Naive thymus-derived CD4-positive, alpha-beta T cell (primary cell): ENCODE measurements at regions of chr19 and their contacts with region 1.

Region 1: GRCh38 chr19:6891761-6892385 is 4.5 kb downstream of the ADGRE1 start:
- DNase-seq: peak in 7 of 9 donors; percentile 28 to 75 (median 64)
- ATAC-seq: peak; percentile 74
- H3K4me3 ChIP-seq: peak overlapping the region; percentile 7
- H3K4me3 Mint-ChIP-seq: peak overlapping the region; percentile 54 to 89 (median 72)
- H3K27ac ChIP-seq: peak overlapping the region; percentile 65
- H3K27ac Mint-ChIP-seq: peak overlapping the region; percentile 85 to 97 (median 94)
- H3K4me1 ChIP-seq: peaks cover 31 to 77% of the 10 kb centered on the region in 2 donors
- H3K4me1 Mint-ChIP-seq: peaks cover 61 to 100% (median 93%) of the 10 kb centered on the region in 7 donors
- H3K27me3 ChIP-seq: no peaks in the 10 kb centered on the region
- H3K27me3 Mint-ChIP-seq: no peaks in the 10 kb centered on the region

Region 2: DNA sequence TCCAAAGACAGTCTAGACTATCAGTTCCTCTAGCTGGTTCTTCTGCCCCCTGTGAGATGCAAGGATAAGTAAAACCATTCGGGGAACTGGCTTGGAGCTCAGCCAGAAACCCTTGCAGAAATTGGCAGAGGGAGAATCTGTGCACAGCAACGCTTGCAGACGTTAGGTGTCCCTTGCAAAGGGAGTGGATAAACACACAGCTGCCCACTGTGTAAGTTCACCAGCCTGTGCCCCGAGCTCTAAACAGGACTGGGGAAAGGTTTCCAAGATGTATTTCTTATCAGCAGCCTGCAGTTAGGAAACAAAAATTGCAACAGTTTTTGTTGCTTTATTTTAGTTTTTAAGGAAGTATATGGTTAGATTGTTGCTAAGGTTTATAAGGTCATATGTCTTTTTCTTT is 23.5 kb before region 1 on chr19:
- CTCF ChIA-PET with region 1: interaction called, 25 read pairs
- POLR2A ChIA-PET with region 1: interaction called, 58 read pairs
- intact Hi-C with region 1: loop called (anchors 1 to 2 kb)
- DNase-seq: no peak
- ATAC-seq: peak; percentile 30
- H3K4me3 ChIP-seq: no peak overlapping the region
- H3K4me3 Mint-ChIP-seq: peak overlapping the region in 8 of 10 donors; percentile 11 to 55 (median 29)
- H3K27ac ChIP-seq: peak overlapping the region; percentile 1
- H3K27ac Mint-ChIP-seq: peak overlapping the region in 6 of 9 donors; percentile 28 to 90 (median 76)
- H3K4me1 ChIP-seq: peaks cover 0 to 10% of the 10 kb centered on the region in 2 donors
- H3K4me1 Mint-ChIP-seq: peaks cover 3 to 50% (median 34%) of the 10 kb centered on the region in 7 donors
- H3K27me3 ChIP-seq: no peaks in the 10 kb centered on the region
- H3K27me3 Mint-ChIP-seq: no peaks in the 10 kb centered on the region

Region 3: GRCh38 chr19:6876748-6877147 is 15.1 kb before region 1 on chr19:
- CTCF ChIA-PET with region 1: interaction called, 4 read pairs
- POLR2A ChIA-PET with region 1: interaction called, 17 read pairs
- intact Hi-C with region 1: loop called in 1 of 2 experiments (anchors 2 kb)
- DNase-seq: no peak
- ATAC-seq: peak; percentile 27
- H3K4me3 ChIP-seq: no peak overlapping the region
- H3K4me3 Mint-ChIP-seq: peak overlapping the region in 1 of 10 donors; percentile 36
- H3K27ac ChIP-seq: no peak overlapping the region
- H3K27ac Mint-ChIP-seq: peak overlapping the region in 4 of 9 donors; percentile 19 to 84 (median 58)
- H3K4me1 ChIP-seq: peaks cover 0 to 13% of the 10 kb centered on the region in 2 donors
- H3K4me1 Mint-ChIP-seq: peaks cover 6 to 44% (median 17%) of the 10 kb centered on the region in 7 donors
- H3K27me3 ChIP-seq: no peaks in the 10 kb centered on the region
- H3K27me3 Mint-ChIP-seq: peaks cover 0 to 12% (median 0%) of the 10 kb centered on the region in 5 donors

Region 4: DNA sequence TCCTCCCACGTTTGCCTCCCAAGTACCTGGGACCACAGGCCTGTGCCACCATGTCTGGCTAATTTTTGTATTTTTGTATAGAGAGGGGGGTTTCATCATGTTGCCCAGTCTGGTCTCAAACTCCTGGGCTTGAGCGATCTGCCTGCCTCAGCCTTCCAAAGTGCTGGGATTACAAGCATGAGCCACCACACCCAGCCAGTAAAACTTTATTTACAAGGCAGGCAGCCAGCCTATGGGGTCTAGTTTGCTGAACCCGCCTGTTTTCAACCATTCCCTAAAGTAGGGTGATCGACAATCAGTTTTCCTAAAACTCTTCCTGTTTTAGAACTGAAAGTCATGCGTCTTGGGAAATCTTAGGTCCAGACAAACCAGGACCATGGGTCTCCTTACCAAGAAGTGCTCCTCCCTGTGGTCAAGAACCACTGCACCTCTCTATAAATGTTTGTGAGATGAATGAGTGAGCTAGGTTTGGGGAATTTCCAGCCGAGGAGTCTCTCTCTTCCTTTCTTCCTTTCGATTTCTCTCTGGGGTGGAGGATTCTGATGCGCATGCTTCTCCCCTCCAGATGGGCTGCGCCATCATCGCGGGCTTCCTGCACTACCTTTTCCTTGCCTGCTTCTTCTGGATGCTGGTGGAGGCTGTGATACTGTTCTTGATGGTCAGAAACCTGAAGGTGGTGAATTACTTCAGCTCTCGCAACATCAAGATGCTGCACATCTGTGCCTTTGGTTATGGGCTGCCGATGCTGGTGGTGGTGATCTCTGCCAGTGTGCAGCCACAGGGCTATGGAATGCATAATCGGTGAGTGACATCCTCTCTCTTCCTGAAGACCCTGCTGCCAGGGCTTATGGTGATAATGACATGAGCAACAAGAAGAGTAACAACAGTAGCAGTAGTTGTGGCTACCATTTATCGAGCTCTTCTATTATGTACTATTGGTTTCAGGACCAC is 34.2 kb after region 1 on chr19:
- CTCF ChIA-PET with region 1: no interaction called
- POLR2A ChIA-PET with region 1: interaction called, 6 read pairs
- intact Hi-C with region 1: loop called in 1 of 2 experiments (anchors 2 kb)
- DNase-seq: peak in 7 of 9 donors; percentile 2 to 47 (median 12)
- ATAC-seq: peak; percentile 93
- H3K4me3 ChIP-seq: peak overlapping the region; percentile 34
- H3K4me3 Mint-ChIP-seq: peak overlapping the region; percentile 36 to 89 (median 72)
- H3K27ac ChIP-seq: no peak overlapping the region
- H3K27ac Mint-ChIP-seq: peak overlapping the region in 8 of 9 donors; percentile 5 to 93 (median 90)
- H3K4me1 ChIP-seq: peaks cover 3 to 11% of the 10 kb centered on the region in 2 donors
- H3K4me1 Mint-ChIP-seq: peaks cover 13 to 28% (median 22%) of the 10 kb centered on the region in 7 donors
- H3K27me3 ChIP-seq: no peaks in the 10 kb centered on the region
- H3K27me3 Mint-ChIP-seq: no peaks in the 10 kb centered on the region